CD8-positive, alpha-beta T cell (primary cell): ENCODE measurements at regions of chr1 and their contacts with region 1.

Region 1: GRCh38 chr1:16055613-16056520 is 12.3 kb downstream of the CLCNKB start:
- DNase-seq: peak; percentile 34 to 90 (median 87)
- ATAC-seq: peak; percentile 100
- H3K4me3 ChIP-seq: no peak overlapping the region
- H3K4me3 Mint-ChIP-seq: no peak overlapping the region
- H3K27ac ChIP-seq: no peak overlapping the region
- H3K27ac Mint-ChIP-seq: no peak overlapping the region
- H3K4me1 ChIP-seq: peaks cover 4% of the 10 kb centered on the region
- H3K4me1 Mint-ChIP-seq: peaks cover 6% of the 10 kb centered on the region
- H3K27me3 ChIP-seq: no peaks in the 10 kb centered on the region
- H3K27me3 Mint-ChIP-seq: no peaks in the 10 kb centered on the region
- CTCF ChIP-seq: peak; percentile 89

Region 2: DNA sequence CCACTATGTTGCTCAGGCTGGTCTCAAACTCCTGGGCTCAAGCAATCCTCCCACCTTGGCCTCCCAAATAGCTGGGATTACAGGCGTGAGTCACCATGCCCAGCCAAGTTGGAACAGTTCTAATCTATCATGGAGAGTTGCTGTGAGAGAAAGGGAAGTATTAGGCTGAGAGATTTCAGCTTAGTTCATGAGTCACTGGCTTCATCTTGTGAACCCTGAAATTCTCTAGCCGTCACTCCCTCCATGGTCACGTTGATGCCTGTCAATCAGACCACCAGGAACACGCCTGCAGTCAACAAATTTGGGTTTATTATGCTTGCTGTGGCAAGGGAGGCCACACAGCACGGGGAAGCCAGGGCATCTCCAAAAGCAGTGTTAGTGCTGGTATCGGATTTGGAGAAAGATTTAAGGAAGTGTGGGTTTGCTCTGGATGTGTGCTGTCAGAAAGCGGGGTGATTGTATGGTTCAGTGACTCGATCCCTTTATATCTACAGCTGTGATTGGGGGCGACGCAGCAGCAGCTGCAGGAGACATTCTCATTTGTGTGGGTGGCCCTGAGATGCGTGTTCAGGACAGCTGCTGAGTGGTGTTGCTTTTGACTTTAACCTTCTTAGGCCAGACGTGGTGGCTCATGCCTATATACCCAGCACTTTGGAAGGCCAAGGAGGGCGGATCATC is 267.1 kb before region 1 on chr1:
- CTCF ChIA-PET with region 1: interaction called, 12 read pairs
- POLR2A ChIA-PET with region 1: no interaction called
- intact Hi-C with region 1: loop called in 1 of 2 experiments (anchors 1 kb)
- DNase-seq: peak in 1 of 9 experiments; percentile 18
- ATAC-seq: no peak
- H3K4me3 ChIP-seq: no peak overlapping the region
- H3K4me3 Mint-ChIP-seq: no peak overlapping the region
- H3K27ac ChIP-seq: no peak overlapping the region
- H3K27ac Mint-ChIP-seq: no peak overlapping the region
- H3K4me1 ChIP-seq: no peaks in the 10 kb centered on the region
- H3K4me1 Mint-ChIP-seq: peaks cover 3% of the 10 kb centered on the region
- H3K27me3 ChIP-seq: no peaks in the 10 kb centered on the region
- H3K27me3 Mint-ChIP-seq: peaks cover 11% of the 10 kb centered on the region
- CTCF ChIP-seq: no peak

Region 3: GRCh38 chr1:15803354-15803753 is 252.5 kb before region 1 on chr1:
- CTCF ChIA-PET with region 1: interaction called, 5 read pairs
- POLR2A ChIA-PET with region 1: no interaction called
- intact Hi-C with region 1: loop called in 1 of 2 experiments (anchors 1 kb)
- DNase-seq: peak in 4 of 9 experiments; percentile 8 to 54 (median 28)
- ATAC-seq: peak; percentile 52
- H3K4me3 ChIP-seq: no peak overlapping the region
- H3K4me3 Mint-ChIP-seq: no peak overlapping the region
- H3K27ac ChIP-seq: no peak overlapping the region
- H3K27ac Mint-ChIP-seq: no peak overlapping the region
- H3K4me1 ChIP-seq: no peaks in the 10 kb centered on the region
- H3K4me1 Mint-ChIP-seq: no peaks in the 10 kb centered on the region
- H3K27me3 ChIP-seq: no peaks in the 10 kb centered on the region
- H3K27me3 Mint-ChIP-seq: peaks cover 16% of the 10 kb centered on the region
- CTCF ChIP-seq: peak; percentile 25

Region 4: DNA sequence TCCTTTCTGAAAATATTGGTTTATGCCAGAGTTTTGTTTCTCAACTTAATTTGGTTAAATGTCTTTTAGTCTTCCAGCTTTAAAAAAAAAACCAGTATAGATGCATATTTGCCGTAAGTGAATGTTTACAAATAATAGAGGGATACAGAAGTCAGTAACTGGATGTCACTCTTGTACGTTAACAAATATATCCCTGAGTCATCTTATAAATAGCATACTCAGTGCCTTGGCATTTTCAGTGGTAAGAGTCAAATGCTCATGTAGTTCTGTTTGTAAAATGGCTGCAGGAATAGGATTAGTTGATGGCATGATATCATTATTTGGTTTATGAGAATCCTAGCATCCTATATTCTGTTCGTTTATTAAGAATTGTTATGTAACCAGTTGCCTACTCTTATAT is 153.0 kb before region 1 on chr1:
- CTCF ChIA-PET with region 1: no interaction called
- POLR2A ChIA-PET with region 1: no interaction called
- intact Hi-C with region 1: loop called in 1 of 2 experiments (anchors 10 kb)
- DNase-seq: no peak
- ATAC-seq: no peak
- H3K4me3 ChIP-seq: no peak overlapping the region
- H3K4me3 Mint-ChIP-seq: no peak overlapping the region
- H3K27ac ChIP-seq: no peak overlapping the region
- H3K27ac Mint-ChIP-seq: no peak overlapping the region
- H3K4me1 ChIP-seq: peaks cover 5% of the 10 kb centered on the region
- H3K4me1 Mint-ChIP-seq: peaks cover 41% of the 10 kb centered on the region
- H3K27me3 ChIP-seq: no peaks in the 10 kb centered on the region
- H3K27me3 Mint-ChIP-seq: no peaks in the 10 kb centered on the region
- CTCF ChIP-seq: no peak

Region 5: DNA sequence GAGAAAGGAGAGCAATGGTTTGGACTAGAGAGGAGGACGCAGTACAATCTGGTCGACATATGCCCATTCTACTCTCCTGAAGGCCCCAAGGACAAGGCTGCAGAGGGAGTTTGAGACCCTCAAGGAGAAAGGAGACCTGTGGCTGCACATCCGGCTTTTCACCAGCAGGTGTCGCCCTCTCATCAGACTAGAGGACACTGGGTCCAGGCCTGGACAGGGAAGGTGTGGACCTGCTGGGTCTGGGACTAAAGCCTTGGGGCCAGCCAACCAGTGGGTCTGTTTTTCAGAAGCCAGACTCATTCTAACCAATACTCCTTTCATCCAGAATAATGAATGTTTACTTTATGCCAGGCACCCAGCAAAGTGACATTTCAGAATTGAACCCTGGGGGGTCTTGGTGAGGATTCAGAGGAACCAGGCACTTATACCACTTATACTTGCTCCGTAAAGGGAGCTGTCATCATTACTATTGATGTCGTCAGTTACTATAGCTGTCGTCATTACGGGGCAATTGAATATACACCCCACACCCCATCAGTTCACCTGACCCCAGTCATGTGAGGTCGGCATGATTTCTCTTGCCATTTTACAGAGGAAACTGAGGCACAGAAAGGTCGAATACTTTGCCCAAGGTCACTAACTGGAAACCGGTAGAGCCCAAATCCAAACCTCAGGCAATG is 46.7 kb before region 1 on chr1:
- CTCF ChIA-PET with region 1: interaction called, 22 read pairs
- POLR2A ChIA-PET with region 1: no interaction called
- intact Hi-C with region 1: loop called in 1 of 2 experiments (anchors 1 kb)
- DNase-seq: peak; percentile 53 to 82 (median 73)
- ATAC-seq: peak; percentile 69
- H3K4me3 ChIP-seq: no peak overlapping the region
- H3K4me3 Mint-ChIP-seq: no peak overlapping the region
- H3K27ac ChIP-seq: no peak overlapping the region
- H3K27ac Mint-ChIP-seq: no peak overlapping the region
- H3K4me1 ChIP-seq: peaks cover 5% of the 10 kb centered on the region
- H3K4me1 Mint-ChIP-seq: peaks cover 4% of the 10 kb centered on the region
- H3K27me3 ChIP-seq: peaks cover 0 to 2% of the 10 kb centered on the region in 2 experiments
- H3K27me3 Mint-ChIP-seq: peaks cover 5% of the 10 kb centered on the region
- CTCF ChIP-seq: peak; percentile 99

Region 6: DNA sequence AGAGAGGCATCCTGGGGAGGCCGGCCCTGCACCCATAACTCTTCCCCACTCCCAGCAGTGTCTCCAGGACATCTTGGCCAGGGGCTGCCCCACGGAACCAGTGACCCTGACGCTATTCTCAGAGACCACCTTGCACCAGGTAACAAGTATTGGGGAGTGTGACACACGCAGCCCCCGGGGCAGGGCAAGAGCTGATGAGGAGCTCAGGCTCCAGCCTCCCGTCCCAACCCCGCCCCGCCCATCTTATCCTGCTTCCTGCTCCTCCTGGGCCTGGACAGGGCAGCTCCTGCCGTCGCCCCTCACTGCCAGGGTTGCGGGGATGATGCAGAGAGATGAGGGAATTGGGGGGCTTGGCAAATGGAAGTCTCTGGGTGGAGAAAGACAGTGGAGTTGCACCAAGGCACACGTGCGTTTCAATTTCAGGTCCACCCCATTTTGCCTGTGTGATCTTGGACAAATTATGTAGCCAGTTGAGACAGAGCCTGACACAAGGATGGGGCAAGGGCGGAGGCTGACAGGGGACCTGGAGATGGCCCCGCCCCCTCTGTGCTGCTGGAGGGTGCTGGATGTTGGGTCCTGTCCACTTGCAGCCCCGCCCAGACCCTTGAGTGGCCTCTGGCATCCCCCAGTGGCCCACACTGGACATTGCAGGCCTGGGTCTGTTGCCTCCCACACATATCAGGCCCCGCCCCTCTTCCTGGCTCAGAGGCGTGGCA is 23.3 kb before region 1 on chr1:
- CTCF ChIA-PET with region 1: no interaction called
- POLR2A ChIA-PET with region 1: no interaction called
- intact Hi-C with region 1: loop called in 1 of 2 experiments (anchors 1 kb)
- DNase-seq: peak in 6 of 9 experiments; percentile 6 to 61 (median 43)
- ATAC-seq: peak; percentile 91
- H3K4me3 ChIP-seq: no peak overlapping the region
- H3K4me3 Mint-ChIP-seq: no peak overlapping the region
- H3K27ac ChIP-seq: no peak overlapping the region
- H3K27ac Mint-ChIP-seq: no peak overlapping the region
- H3K4me1 ChIP-seq: no peaks in the 10 kb centered on the region
- H3K4me1 Mint-ChIP-seq: peaks cover 2% of the 10 kb centered on the region
- H3K27me3 ChIP-seq: peaks cover 0 to 3% of the 10 kb centered on the region in 2 experiments
- H3K27me3 Mint-ChIP-seq: peaks cover 27% of the 10 kb centered on the region
- CTCF ChIP-seq: no peak